Activated CD4-positive, alpha-beta memory T cell treated with anti-CD3 and anti-CD28 coated beads for 36 hours (primary cell): ENCODE measurements at regions of chr1 and their contacts with region 1.

Region 1: GRCh38 chr1:234842726-234843641 is 233.0 kb upstream of the IRF2BP2 start:
- DNase-seq: peak; percentile 93
- H3K4me3 Mint-ChIP-seq: peak overlapping the region; percentile 71
- H3K27ac Mint-ChIP-seq: peak overlapping the region; percentile 99
- H3K4me1 Mint-ChIP-seq: peaks cover 87% of the 10 kb centered on the region
- H3K27me3 Mint-ChIP-seq: no peaks in the 10 kb centered on the region

Region 2: GRCh38 chr1:234730770-234731568 is 112.0 kb before region 1 on chr1:
- CTCF ChIA-PET with region 1: interaction called, 3 read pairs
- POLR2A ChIA-PET with region 1: interaction called, 35 read pairs
- intact Hi-C with region 1: loop called (anchors 1 kb)
- DNase-seq: peak; percentile 78
- H3K4me3 Mint-ChIP-seq: peak overlapping the region; percentile 40
- H3K27ac Mint-ChIP-seq: peak overlapping the region; percentile 99
- H3K4me1 Mint-ChIP-seq: peaks cover 77% of the 10 kb centered on the region
- H3K27me3 Mint-ChIP-seq: no peaks in the 10 kb centered on the region

Region 3: GRCh38 chr1:234881893-234882771 is 39.1 kb after region 1 on chr1:
- CTCF ChIA-PET with region 1: no interaction called
- POLR2A ChIA-PET with region 1: interaction called, 5 read pairs
- intact Hi-C with region 1: loop called (anchors 1 kb)
- DNase-seq: peak; percentile 72
- H3K4me3 Mint-ChIP-seq: no peak overlapping the region
- H3K27ac Mint-ChIP-seq: peak overlapping the region; percentile 59
- H3K4me1 Mint-ChIP-seq: peaks cover 40% of the 10 kb centered on the region
- H3K27me3 Mint-ChIP-seq: no peaks in the 10 kb centered on the region

Region 4: GRCh38 chr1:234963180-234963903 is 120.4 kb after region 1 on chr1:
- CTCF ChIA-PET with region 1: interaction called, 4 read pairs
- POLR2A ChIA-PET with region 1: interaction called, 7 read pairs
- intact Hi-C with region 1: loop called (anchors 1 kb)
- DNase-seq: peak; percentile 97
- H3K4me3 Mint-ChIP-seq: peak overlapping the region; percentile 63
- H3K27ac Mint-ChIP-seq: peak overlapping the region; percentile 98
- H3K4me1 Mint-ChIP-seq: peaks cover 67% of the 10 kb centered on the region
- H3K27me3 Mint-ChIP-seq: no peaks in the 10 kb centered on the region

Region 5: GRCh38 chr1:234978397-234979295 is 135.7 kb after region 1 on chr1:
- CTCF ChIA-PET with region 1: interaction called, 3 read pairs
- POLR2A ChIA-PET with region 1: interaction called, 21 read pairs
- intact Hi-C with region 1: loop called (anchors 1 kb)
- DNase-seq: peak; percentile 86
- H3K4me3 Mint-ChIP-seq: peak overlapping the region; percentile 90
- H3K27ac Mint-ChIP-seq: peak overlapping the region; percentile 97
- H3K4me1 Mint-ChIP-seq: peaks cover 80% of the 10 kb centered on the region
- H3K27me3 Mint-ChIP-seq: no peaks in the 10 kb centered on the region

Region 6: GRCh38 chr1:235050911-235051360 is 208.0 kb after region 1 on chr1:
- CTCF ChIA-PET with region 1: no interaction called
- POLR2A ChIA-PET with region 1: interaction called, 4 read pairs
- intact Hi-C with region 1: loop called (anchors 1 kb)
- DNase-seq: peak; percentile 76
- H3K4me3 Mint-ChIP-seq: no peak overlapping the region
- H3K27ac Mint-ChIP-seq: peak overlapping the region; percentile 74
- H3K4me1 Mint-ChIP-seq: peaks cover 51% of the 10 kb centered on the region
- H3K27me3 Mint-ChIP-seq: no peaks in the 10 kb centered on the region